ENCODE measurements at regions of chr10 and their contacts with region 1.

Region 1: GRCh38 chr10:30591249-30591670 is 38.3 kb downstream of the LYZL2 start:
- DNase-seq: peak; percentile 48
- ATAC-seq: peak; percentile 64
- H3K4me3 Mint-ChIP-seq: no peak overlapping the region
- H3K27ac Mint-ChIP-seq: no peak overlapping the region
- H3K4me1 Mint-ChIP-seq: peaks cover 17% of the 10 kb centered on the region
- H3K27me3 Mint-ChIP-seq: peaks cover 24% of the 10 kb centered on the region

Region 2: GRCh38 chr10:30374353-30374752 is 216.9 kb before region 1 on chr10:
- CTCF ChIA-PET with region 1: interaction called, 16 read pairs
- DNase-seq: no peak
- ATAC-seq: no peak
- H3K4me3 Mint-ChIP-seq: no peak overlapping the region
- H3K27ac Mint-ChIP-seq: peak overlapping the region; percentile 87
- H3K4me1 Mint-ChIP-seq: peaks cover 42% of the 10 kb centered on the region
- H3K27me3 Mint-ChIP-seq: peaks cover 17% of the 10 kb centered on the region

Region 3: DNA sequence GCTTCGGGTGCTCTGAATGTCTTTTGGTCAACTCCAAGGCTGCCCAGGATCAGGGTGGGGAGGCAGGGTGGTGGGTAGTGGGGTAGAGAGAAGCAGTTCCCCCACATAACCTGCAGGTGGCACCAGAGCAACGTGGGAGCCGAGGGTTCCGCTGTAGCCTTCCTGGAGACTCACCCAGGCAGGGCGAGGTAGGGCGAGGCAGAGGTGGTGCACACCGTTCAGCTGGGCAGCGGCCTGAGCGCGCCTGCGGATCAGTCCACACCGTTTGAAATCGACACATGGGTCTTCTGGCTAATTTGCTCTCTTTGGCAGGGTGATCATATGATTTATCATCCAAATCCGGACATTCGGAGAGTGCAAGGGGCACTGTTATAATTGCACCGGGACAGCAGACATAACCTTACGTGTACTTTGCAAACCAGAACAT is 198.7 kb before region 1 on chr10:
- CTCF ChIA-PET with region 1: interaction called, 141 read pairs
- DNase-seq: peak; percentile 84
- ATAC-seq: peak; percentile 100
- H3K4me3 Mint-ChIP-seq: peak overlapping the region; percentile 46
- H3K27ac Mint-ChIP-seq: no peak overlapping the region
- H3K4me1 Mint-ChIP-seq: peaks cover 10% of the 10 kb centered on the region
- H3K27me3 Mint-ChIP-seq: peaks cover 30% of the 10 kb centered on the region

Region 4: GRCh38 chr10:30413996-30414576 is 177.2 kb before region 1 on chr10:
- CTCF ChIA-PET with region 1: interaction called, 18 read pairs
- DNase-seq: peak; percentile 54
- ATAC-seq: peak; percentile 58
- H3K4me3 Mint-ChIP-seq: no peak overlapping the region
- H3K27ac Mint-ChIP-seq: peak overlapping the region; percentile 36
- H3K4me1 Mint-ChIP-seq: peaks cover 46% of the 10 kb centered on the region
- H3K27me3 Mint-ChIP-seq: no peaks in the 10 kb centered on the region

Region 5: DNA sequence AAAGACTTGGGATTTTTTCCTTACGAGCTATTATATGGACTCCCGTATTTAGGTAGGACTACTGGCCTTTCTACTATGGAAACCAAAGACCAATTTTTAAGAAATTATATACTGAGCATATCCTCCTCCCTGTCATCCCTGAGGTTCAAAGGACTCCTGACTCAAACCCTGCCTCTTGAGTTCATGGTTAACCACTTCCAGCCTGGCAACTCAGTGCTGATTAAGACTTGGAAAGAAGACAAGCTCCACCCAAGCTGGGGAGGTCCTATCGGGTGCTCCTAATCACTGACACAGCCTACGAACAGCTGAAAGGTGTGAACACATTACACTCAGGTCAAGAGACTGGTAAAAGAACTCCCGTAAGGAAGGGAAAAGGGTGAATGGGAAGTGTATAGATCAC is 28.5 kb before region 1 on chr10:
- CTCF ChIA-PET with region 1: interaction called, 10 read pairs
- DNase-seq: peak; percentile 86
- ATAC-seq: peak; percentile 95
- H3K4me3 Mint-ChIP-seq: no peak overlapping the region
- H3K27ac Mint-ChIP-seq: no peak overlapping the region
- H3K4me1 Mint-ChIP-seq: peaks cover 13% of the 10 kb centered on the region
- H3K27me3 Mint-ChIP-seq: peaks cover 33% of the 10 kb centered on the region

Region 6: DNA sequence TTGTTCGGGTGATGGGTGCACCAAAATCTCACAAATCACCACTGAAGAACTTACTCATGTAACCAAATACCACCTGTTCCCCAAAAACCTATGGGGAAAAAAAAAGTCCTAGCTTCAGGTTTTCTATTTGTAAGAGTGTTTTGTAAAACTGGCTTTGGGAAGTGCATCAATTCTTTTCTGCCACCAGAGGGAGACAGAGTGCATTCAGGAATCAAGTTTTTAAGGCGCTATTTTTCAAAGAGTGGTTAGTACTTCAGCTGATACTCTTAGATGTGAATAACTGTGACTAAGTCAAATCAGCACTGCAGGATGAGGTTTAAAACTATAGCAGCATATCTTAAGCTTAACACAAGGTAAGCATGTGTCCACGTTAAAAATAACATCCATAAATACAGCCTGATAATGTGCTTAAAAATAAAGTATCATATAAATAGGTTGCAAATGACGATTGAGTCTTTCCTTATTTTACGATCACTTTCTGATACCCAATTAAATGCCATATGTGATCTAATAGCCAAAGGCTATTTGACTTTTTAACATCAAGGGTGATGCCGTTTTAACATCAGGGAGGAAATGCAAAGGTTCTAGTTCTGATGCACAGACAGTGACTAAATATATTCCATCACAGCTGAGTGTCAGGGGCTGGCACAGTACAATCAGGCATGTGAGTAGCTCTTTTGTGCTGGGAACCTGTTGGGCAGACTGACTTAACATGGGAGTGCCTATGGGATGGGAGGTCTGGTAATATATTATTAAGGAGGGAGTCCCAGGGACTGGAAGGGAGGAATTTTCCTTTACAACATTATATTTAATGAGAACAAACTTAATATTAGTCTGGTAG is 48.9 kb after region 1 on chr10:
- CTCF ChIA-PET with region 1: interaction called, 14 read pairs
- DNase-seq: peak; percentile 38
- ATAC-seq: peak; percentile 30
- H3K4me3 Mint-ChIP-seq: no peak overlapping the region
- H3K27ac Mint-ChIP-seq: no peak overlapping the region
- H3K4me1 Mint-ChIP-seq: peaks cover 18% of the 10 kb centered on the region
- H3K27me3 Mint-ChIP-seq: peaks cover 54% of the 10 kb centered on the region

Region 7: GRCh38 chr10:30928742-30929141 is 337.5 kb after region 1 on chr10:
- CTCF ChIA-PET with region 1: no interaction called
- DNase-seq: no peak
- ATAC-seq: peak; percentile 23
- H3K4me3 Mint-ChIP-seq: peak overlapping the region; percentile 62
- H3K27ac Mint-ChIP-seq: peak overlapping the region; percentile 73
- H3K4me1 Mint-ChIP-seq: peaks cover 12% of the 10 kb centered on the region
- H3K27me3 Mint-ChIP-seq: no peaks in the 10 kb centered on the region

Measured in activated CD8-positive, alpha-beta memory T cell treated with anti-CD3 and anti-CD28 coated beads, Interleukin-2, amount 10 ng/mL, durations not matched to agents 7 days and 5 days (primary cell).